A549 (cell line): ENCODE measurements at regions of chr3 and their contacts with region 1.

Region 1: DNA sequence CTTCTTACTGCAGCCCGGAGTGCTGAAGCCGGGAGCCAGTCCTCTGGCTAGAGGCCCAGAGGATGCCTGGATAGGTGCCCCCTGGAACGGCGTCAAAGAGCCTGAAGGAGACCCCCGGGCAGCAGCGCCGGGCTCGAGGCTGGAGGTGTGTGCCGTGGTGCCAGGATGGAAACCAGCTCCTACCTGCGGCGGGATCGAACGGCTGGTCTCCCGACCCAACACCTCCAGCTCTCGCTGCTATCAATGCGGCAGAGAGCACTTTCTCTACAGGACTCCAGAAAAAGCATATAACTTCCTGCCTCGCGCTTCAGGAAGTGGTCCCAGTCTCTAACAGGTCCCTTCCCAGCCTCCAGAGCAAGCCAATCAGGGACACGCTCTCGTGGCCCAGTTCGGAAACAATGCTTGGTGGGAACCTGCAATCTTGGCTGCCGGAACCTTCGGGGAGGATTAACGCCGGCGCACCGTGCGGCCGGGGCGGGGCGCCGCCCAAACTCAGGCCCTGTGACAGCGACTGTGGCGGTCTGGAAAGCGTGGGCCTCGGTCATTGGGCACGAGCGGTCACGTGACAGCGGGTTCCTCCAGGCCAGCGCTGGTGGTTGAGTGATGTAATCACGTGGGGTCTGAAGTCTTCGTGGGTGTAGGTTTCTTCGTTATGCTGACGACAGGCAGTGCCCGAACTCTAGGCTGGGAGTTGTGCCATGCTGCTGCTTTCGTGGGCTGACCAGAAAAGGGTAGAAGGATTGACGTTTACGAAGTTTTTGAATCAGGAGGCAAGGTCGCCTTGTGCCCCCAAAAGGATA is at the start of gene SLC33A1:
- DNase-seq: peak; percentile 100
- ATAC-seq: peak; percentile 98
- H3K4me3 ChIP-seq: peak within 1 kb of the TSS; percentile 71
- H3K27ac ChIP-seq: peak within 1 kb of the TSS; percentile 92 to 94
- H3K4me1 ChIP-seq: peaks cover 16% of the 10 kb centered on the region
- CTCF ChIP-seq: no peak
- EP300 ChIP-seq: peak in 1 of 2 experiments; percentile 41; a peak in 1 of 5 replicates
- POLR2A ChIP-seq: peak; percentile 91
- RAD21 ChIP-seq: no peak
- polyA plus RNA-seq, gene SLC33A1: 42.6 and 45.9 TPM in 2 replicates

Region 2: GRCh38 chr3:155870133-155870944 is 16.0 kb after region 1 on chr3 and contains the start of gene GMPS:
- CTCF ChIA-PET with region 1: interaction called, 5 read pairs
- POLR2A ChIA-PET with region 1: interaction called, 19 read pairs
- DNase-seq: peak; percentile 85 to 91
- ATAC-seq: peak; percentile 90 to 93
- H3K4me3 ChIP-seq: peak within 1 kb of the TSS; percentile 97
- H3K27ac ChIP-seq: peak within 1 kb of the TSS; percentile 95 to 97
- H3K4me1 ChIP-seq: peaks cover 29% of the 10 kb centered on the region; the same call in 2 of the 3 replicates
- CTCF ChIP-seq: peak; percentile 51
- EP300 ChIP-seq: no peak
- POLR2A ChIP-seq: peak; percentile 70
- RAD21 ChIP-seq: peak; percentile 24 to 58; a peak in 4 of 5 replicates
- polyA plus RNA-seq, gene GMPS: 77.2 and 114 TPM in 2 replicates